ENCODE measurements at regions of chr3 and their contacts with region 1.

Region 1: DNA sequence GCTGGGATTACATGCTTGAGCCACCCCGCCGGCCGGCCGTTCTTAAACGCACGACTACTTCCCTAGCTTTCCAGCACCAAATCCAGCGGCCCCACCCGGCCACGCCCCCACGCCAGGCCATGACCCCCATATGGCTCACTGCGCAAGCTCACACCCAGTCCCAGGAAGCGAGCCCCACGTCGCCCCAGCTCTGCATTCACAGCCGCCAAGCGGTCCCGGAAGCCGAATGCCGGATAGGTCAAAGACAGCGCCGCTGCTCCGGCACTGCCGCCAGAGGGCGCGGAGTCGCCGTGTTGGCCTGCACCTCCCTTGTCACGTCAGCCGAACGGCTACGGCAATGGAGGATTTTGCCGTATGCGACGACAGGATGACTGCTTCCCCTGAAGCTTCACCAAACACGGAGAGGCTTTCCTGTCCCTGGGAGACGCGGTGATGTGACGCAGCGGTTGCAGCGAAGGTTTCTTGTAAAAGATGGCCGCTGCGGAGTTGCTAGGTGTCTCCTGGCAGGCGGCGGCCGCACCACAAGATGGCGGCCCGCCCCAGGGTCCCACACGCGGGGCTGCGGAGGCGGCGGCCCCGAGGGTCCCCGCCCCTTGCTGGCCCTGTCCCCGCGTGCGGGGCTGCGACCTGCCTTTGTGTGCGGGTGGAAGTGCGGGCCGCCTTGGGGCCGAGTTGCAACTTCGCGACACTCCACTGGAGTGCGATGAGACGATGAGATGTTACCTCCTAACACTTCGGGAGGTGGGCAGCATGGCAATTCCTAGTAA is 30.2 kb upstream of the RPN1 start:
- DNase-seq: peak; percentile 97
- H3K4me3 Mint-ChIP-seq: peak overlapping the region; percentile 85
- H3K27ac Mint-ChIP-seq: peak overlapping the region; percentile 95
- H3K4me1 Mint-ChIP-seq: peaks cover 42% of the 10 kb centered on the region
- H3K27me3 Mint-ChIP-seq: peaks cover 2% of the 10 kb centered on the region

Region 2: GRCh38 chr3:128572644-128573105 is 108.1 kb before region 1 on chr3:
- CTCF ChIA-PET with region 1: no interaction called
- POLR2A ChIA-PET with region 1: no interaction called
- DNase-seq: peak; percentile 57
- H3K4me3 Mint-ChIP-seq: no peak overlapping the region
- H3K27ac Mint-ChIP-seq: no peak overlapping the region
- H3K4me1 Mint-ChIP-seq: peaks cover 16% of the 10 kb centered on the region
- H3K27me3 Mint-ChIP-seq: peaks cover 28% of the 10 kb centered on the region

Region 3: DNA sequence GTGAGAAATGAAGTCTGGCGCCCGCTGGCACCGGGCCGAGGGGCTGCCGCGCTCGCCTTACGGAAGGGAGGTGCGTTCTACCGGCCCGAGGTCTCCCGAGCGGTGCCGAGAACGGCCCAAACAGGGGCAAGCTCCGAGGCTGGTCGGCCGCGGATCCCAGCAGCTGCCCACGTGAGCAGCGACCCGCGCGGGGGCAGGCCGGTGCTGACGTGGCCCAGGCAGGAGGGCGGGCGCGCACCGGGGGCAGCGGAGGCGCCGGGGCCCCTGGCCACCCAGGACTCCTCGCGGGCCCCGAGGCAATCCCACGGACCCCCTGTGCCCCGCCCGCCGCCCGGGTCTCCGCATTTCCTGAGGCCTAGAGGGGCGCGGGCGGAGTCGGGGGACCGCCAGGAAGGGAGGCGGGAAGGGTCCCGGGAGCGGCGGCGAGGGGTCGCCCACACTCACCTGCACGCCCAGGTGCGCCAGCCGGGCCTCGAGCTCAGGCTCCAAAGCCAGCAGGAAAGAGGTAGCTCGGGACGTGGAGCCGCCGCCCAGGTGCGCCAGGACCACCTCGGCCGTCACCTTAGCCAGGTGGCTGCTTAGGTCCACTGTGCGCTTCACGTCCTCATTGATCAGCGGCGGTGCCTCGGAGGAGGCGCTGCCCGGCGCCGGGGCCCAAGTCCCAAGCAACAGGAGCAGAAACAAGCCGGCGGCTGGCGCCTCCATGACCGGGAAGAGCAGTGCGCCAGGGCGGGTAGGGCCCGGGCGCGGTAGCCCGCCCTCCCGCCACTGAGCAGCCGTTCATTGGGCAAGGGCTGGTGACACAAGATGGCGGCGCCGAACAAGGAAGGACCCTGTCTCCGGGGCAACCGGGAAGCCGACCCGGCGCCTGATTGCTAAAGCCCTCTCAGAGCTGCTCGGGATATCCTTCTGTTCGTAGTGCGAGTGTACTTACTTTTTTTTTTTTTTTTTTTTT is 30.4 kb before region 1 on chr3 and contains the start of gene RPN1:
- CTCF ChIA-PET with region 1: interaction called, 17 read pairs
- POLR2A ChIA-PET with region 1: no interaction called
- DNase-seq: peak; percentile 97
- H3K4me3 Mint-ChIP-seq: peak within 1 kb of the TSS; percentile 84
- H3K27ac Mint-ChIP-seq: peak within 1 kb of the TSS; percentile 92
- H3K4me1 Mint-ChIP-seq: peaks cover 45% of the 10 kb centered on the region
- H3K27me3 Mint-ChIP-seq: no peaks in the 10 kb centered on the region
- total RNA-seq, gene RPN1: 164 to 177 TPM

Region 4: GRCh38 chr3:128714887-128715491 is 34.2 kb after region 1 on chr3:
- CTCF ChIA-PET with region 1: interaction called, 11 read pairs
- POLR2A ChIA-PET with region 1: no interaction called
- DNase-seq: peak; percentile 48
- H3K4me3 Mint-ChIP-seq: no peak overlapping the region
- H3K27ac Mint-ChIP-seq: peak overlapping the region; percentile 94
- H3K4me1 Mint-ChIP-seq: peaks cover 31% of the 10 kb centered on the region
- H3K27me3 Mint-ChIP-seq: peaks cover 1% of the 10 kb centered on the region

Region 5: GRCh38 chr3:128787256-128788240 is 106.8 kb after region 1 on chr3:
- CTCF ChIA-PET with region 1: interaction called, 13 read pairs
- POLR2A ChIA-PET with region 1: interaction called, 3 read pairs
- DNase-seq: peak; percentile 42
- H3K4me3 Mint-ChIP-seq: peak overlapping the region; percentile 69
- H3K27ac Mint-ChIP-seq: peak overlapping the region; percentile 95
- H3K4me1 Mint-ChIP-seq: peaks cover 87% of the 10 kb centered on the region
- H3K27me3 Mint-ChIP-seq: no peaks in the 10 kb centered on the region

Region 6: DNA sequence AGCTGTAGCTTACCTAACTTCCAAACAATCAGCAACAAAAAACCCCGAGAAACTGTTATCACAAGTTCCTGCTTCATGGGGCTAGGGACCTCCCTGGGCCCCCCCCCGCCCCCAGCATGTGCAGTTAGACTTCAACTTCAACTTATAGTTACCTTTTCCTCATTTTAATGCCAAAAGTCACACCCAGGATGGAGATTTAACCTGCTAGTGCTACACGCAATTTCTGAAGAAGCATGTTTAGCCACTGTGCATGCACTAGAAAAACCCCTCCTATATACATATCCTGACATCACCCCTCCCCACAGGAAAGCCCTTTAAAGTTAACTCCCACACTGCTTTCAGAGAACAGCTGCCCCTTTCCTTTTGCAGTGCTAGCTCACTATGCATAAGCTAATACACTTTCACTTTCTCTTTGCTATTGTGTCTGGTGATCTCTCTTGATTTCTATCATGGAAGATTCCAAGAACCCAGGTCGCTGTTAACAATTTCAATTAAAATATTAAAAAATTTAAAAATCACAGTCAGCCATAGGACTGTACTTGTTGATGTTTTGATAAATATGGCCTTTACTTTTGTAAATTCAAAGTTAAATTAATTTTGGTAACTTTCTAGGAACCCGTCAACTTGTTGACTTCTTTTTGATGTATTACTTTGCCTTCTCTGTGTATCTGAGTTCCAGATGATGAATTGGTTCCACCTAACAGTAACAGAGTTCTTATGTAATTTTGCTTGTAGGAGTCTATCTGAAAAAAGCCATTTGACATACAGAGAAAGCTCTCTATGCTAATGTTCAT is 123.4 kb after region 1 on chr3:
- CTCF ChIA-PET with region 1: interaction called, 22 read pairs
- POLR2A ChIA-PET with region 1: no interaction called
- DNase-seq: peak; percentile 85
- H3K4me3 Mint-ChIP-seq: peak overlapping the region; percentile 74
- H3K27ac Mint-ChIP-seq: peak overlapping the region; percentile 95
- H3K4me1 Mint-ChIP-seq: peaks cover 73% of the 10 kb centered on the region
- H3K27me3 Mint-ChIP-seq: no peaks in the 10 kb centered on the region

Region 7: GRCh38 chr3:128879125-128879969 is 198.6 kb after region 1 on chr3 and contains the start of gene ACAD9:
- CTCF ChIA-PET with region 1: interaction called, 19 read pairs
- POLR2A ChIA-PET with region 1: no interaction called
- DNase-seq: peak; percentile 97
- H3K4me3 Mint-ChIP-seq: peak within 1 kb of the TSS; percentile 91
- H3K27ac Mint-ChIP-seq: peak within 1 kb of the TSS; percentile 98
- H3K4me1 Mint-ChIP-seq: peaks cover 61% of the 10 kb centered on the region
- H3K27me3 Mint-ChIP-seq: peaks cover 3% of the 10 kb centered on the region
- total RNA-seq, gene ACAD9: 74.7 to 77.4 TPM

Region 8: GRCh38 chr3:129992781-129993180 is 1312.0 kb after region 1 on chr3:
- CTCF ChIA-PET with region 1: no interaction called
- POLR2A ChIA-PET with region 1: no interaction called
- DNase-seq: no peak
- H3K4me3 Mint-ChIP-seq: no peak overlapping the region
- H3K27ac Mint-ChIP-seq: no peak overlapping the region
- H3K4me1 Mint-ChIP-seq: no peaks in the 10 kb centered on the region
- H3K27me3 Mint-ChIP-seq: peaks cover 13% of the 10 kb centered on the region

Measured in activated CD4-positive, alpha-beta T cell treated with anti-CD3 and anti-CD28 coated beads, Interleukin-2, amount 10 ng/mL, durations not matched to agents 7 days and 5 days (primary cell).